ENCODE measurements at regions of chr6 and their contacts with region 1.

Region 1: DNA sequence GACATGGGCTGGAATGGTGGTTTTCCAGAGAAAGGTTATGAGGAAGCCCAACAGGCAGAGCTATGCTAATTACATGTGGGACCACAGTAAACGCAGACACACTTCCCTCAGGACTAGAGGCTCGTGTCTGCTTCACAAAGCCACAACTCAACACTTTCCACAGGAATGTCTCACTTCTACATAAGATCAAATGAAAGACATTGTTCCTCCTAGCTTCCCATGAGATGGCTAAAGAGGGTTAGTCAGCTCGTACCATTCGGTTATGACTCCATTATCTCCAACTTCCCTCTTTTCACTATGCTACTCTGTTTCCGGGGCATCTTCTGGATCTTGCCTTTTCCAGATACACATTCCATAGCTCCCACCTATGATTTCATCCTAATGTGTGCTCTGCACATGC is 29.1 kb upstream of the ZC3H12D start:
- H3K4me3 Mint-ChIP-seq: peak overlapping the region; percentile 27
- H3K27ac Mint-ChIP-seq: peak overlapping the region; percentile 89
- H3K4me1 Mint-ChIP-seq: peaks cover 33% of the 10 kb centered on the region
- H3K27me3 Mint-ChIP-seq: no peaks in the 10 kb centered on the region

Region 2: GRCh38 chr6:149028767-149029405 is 485.0 kb before region 1 on chr6:
- intact Hi-C with region 1: loop called (anchors 2 kb)
- H3K4me3 Mint-ChIP-seq: no peak overlapping the region
- H3K27ac Mint-ChIP-seq: no peak overlapping the region
- H3K4me1 Mint-ChIP-seq: peaks cover 19% of the 10 kb centered on the region
- H3K27me3 Mint-ChIP-seq: no peaks in the 10 kb centered on the region

Region 3: DNA sequence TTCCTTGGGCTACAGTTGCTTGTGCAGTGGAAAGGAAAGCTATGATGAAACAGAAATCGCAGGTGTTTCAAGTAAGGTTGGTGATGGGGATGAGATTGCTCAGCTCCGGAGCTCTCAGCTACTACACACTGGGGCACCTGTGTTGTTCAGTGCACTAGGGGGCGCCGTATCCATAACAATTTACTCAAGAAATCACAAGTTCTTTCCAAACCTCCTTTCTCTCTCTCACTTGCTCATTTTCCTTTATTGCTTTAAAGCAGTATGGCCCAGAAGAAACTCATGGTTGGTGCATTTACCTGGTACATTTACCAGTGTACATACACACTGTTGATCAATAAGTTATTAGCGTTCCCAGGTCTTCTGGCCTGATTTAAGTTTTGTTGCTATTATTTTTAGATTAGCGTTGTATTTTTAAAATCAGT is 431.6 kb before region 1 on chr6:
- intact Hi-C with region 1: loop called (anchors 2 kb)
- H3K4me3 Mint-ChIP-seq: no peak overlapping the region
- H3K27ac Mint-ChIP-seq: no peak overlapping the region
- H3K4me1 Mint-ChIP-seq: peaks cover 33% of the 10 kb centered on the region
- H3K27me3 Mint-ChIP-seq: no peaks in the 10 kb centered on the region

Region 4: GRCh38 chr6:149431905-149432775 is 81.8 kb before region 1 on chr6:
- intact Hi-C with region 1: loop called (anchors 1 kb)
- H3K4me3 Mint-ChIP-seq: no peak overlapping the region
- H3K27ac Mint-ChIP-seq: no peak overlapping the region
- H3K4me1 Mint-ChIP-seq: peaks cover 15% of the 10 kb centered on the region
- H3K27me3 Mint-ChIP-seq: no peaks in the 10 kb centered on the region

Region 5: DNA sequence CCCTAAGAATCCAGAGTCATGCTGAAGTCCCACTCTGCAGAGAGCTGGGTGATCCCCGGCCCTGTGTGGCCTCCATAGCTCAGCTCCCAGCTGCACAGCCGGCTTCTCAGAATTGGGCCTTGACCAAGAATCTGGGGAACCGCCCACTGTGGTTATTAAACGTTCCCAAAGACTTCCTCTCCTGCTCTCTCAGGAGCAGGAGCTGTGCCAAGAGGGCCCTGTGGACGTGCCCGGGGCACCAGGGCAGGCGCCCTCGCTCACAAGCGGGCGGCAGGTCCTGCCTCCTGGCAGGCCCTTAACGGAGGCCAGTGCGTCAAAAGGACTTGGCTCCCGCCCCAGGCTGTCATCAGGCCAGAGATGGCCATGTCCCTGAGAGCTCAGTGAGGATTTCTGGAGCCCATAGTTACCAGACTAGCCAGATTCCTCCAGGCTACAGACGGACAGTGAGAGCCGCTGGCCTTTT is 59.5 kb before region 1 on chr6:
- intact Hi-C with region 1: loop called (anchors 5 kb)
- H3K4me3 Mint-ChIP-seq: peak overlapping the region; percentile 13
- H3K27ac Mint-ChIP-seq: peak overlapping the region; percentile 87
- H3K4me1 Mint-ChIP-seq: peaks cover 64% of the 10 kb centered on the region
- H3K27me3 Mint-ChIP-seq: no peaks in the 10 kb centered on the region

Region 6: DNA sequence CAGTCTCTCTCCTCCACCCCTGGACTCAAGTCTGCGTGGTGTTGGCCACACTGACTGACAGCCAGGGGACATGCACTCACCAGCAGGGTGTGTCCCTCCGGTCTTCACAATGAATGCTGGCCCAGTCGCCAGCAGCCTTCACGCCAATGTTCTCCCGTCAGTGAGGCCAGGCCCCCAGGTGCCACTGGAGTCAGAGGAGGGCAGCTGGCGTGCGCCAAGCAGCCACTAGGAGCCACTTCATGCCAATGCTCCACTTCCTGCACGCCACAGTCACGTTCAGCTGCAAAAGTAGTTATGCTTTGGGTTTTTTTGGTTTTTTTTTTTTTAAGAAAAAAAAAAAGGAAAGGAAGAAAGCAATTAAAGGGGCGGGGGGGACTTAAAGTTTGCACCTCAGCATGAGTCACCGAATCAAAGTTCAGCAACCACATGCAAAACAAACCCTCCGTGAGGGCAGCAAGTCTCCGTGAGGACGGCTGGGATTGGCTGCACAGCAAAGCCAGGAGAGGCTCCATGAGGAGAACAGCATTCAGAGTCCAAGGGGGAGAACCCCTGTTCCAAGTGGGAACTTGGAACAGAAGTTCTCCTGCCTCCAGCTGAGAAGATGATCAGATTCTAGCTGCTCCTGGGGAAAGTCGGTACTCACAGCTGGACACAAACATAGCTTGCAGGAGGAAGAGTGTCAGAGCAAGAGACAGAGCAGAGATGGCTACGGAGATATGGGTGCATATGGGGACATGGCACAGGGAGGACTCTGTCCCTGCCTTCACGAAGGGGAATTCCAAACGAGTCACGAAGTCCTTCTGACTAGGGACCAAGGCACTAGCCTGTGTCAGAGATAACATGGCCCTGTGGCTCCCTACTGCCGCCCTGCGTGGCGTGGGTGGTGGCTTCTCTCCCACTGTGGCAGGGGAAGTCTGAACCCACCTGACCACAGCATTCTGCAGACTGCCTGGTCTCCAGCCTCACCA is 28.9 kb before region 1 on chr6 and contains the start of gene ZC3H12D:
- intact Hi-C with region 1: loop called (anchors 1 kb)
- H3K4me3 Mint-ChIP-seq: peak within 1 kb of the TSS; percentile 76
- H3K27ac Mint-ChIP-seq: peak within 1 kb of the TSS; percentile 99
- H3K4me1 Mint-ChIP-seq: peaks cover 75% of the 10 kb centered on the region
- H3K27me3 Mint-ChIP-seq: no peaks in the 10 kb centered on the region

Measured in dendritic cell treated with granulocyte-macrophage colony-stimulating factor and Interleukin-4, amounts not matched to agents 40 ng/mL and 50 ng/mL, for 4 days (primary cell).